Panc1 (cell line): ENCODE measurements at regions of chr19 and their contacts with region 1.

Region 1: DNA sequence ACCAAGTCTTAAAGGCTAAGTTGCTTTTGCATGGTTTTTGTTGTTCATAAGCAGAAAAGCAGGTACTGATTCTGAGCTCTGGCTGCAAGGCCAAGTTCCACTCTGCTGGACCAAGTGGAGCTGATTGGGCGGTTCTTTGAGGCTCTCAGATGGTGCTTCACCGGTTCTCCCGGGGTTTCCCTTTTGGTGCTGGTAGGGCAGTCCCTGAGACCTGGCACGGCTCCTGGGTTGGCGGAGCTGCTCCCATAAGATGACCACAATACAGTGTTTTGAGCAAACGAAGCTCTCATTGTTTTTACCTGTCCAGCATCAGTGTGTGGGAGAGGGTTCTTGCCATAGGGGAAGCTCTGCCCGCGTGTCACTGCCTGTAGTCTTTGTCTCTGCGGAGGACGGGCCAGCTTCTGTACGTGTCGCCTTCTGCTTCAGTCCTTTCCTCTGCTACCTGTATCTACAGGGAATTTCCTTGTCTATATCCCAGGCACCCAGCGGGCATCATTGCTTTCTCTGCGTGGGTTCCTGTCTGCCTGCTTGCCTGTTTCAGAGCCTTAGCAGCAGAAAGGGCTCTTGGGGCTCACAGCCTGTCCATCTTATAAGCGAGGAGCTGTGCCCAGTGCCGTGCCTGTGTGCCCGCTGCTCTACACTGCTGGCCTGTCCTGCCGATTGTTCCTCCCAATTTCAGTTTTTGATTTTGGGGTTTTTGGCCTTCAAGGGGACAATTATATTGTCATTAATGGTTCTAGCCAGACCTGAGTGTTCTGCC is 2.3 kb downstream of the U2AF2 start:
- DNase-seq: no peak
- ATAC-seq: no peak
- H3K4me3 ChIP-seq: peak overlapping the region; percentile 72 to 85
- H3K27ac ChIP-seq: peak overlapping the region; percentile 99
- H3K4me1 ChIP-seq: peaks cover 36% of the 10 kb centered on the region
- H3K27me3 ChIP-seq: no peaks in the 10 kb centered on the region
- CTCF ChIP-seq: no peak

Region 2: DNA sequence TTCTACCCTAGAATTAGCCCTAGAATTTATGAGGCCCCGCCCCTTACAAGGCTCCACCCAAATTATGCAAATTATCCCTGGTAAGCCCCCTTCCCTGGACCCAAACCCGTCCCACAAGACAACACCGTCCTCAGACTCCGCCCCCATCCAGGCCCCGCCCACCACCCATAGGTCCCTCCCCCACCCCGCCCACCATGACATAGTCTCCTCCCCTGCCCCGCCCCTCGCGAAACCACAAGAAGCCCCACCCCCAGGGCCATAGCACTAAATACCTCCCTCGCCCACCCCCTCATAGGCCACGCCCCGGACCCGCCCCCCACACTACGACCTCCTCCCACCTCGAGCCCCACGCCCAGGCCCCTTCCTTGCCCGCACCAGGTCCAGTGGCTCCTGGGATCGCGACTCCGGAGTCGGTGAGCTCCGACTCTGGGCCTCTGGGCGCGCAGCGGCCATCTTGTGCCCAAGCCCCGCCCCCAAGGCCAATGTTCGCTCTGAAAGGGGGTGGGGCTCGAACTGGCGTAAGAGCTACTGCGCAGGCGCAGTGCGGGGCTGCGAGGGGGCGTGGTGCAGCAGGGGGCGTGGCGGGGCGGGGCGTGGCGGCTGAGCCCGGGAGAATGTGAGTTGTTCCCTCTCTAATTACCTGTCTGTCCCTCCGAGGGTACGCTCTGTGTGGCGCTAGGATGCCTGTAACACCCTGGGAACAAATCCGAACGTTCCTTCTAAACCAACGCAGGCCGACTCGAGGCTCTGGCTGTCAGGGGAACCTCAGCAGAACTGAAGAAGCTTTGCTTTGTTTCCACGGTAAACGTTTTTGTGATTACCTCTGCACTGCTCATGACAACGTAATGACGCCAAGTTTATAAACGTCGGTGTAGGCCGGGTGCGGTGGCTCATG is 32.8 kb before region 1 on chr19 and contains the start of gene ZNF784:
- CTCF ChIA-PET with region 1: no interaction called
- POLR2A ChIA-PET with region 1: no interaction called
- in situ Hi-C with region 1: no loop called
- intact Hi-C with region 1: no loop called
- DNase-seq: no peak
- ATAC-seq: peak; percentile 85
- H3K4me3 ChIP-seq: peak within 1 kb of the TSS; percentile 60 to 82
- H3K27ac ChIP-seq: peak within 1 kb of the TSS; percentile 49
- H3K4me1 ChIP-seq: 0 out of 2 replicates have a peak, but pooled peaks cover 3% of the 10 kb centered on the region
- H3K27me3 ChIP-seq: no peaks in the 10 kb centered on the region
- CTCF ChIP-seq: no peak
- total RNA-seq, gene ZNF784: 8.9 TPM

Region 3: GRCh38 chr19:55668603-55669348 is 11.6 kb after region 1 on chr19:
- CTCF ChIA-PET with region 1: interaction called, 10 read pairs
- POLR2A ChIA-PET with region 1: interaction called, 5 read pairs
- in situ Hi-C with region 1: no loop called
- intact Hi-C with region 1: no loop called
- DNase-seq: no peak
- ATAC-seq: no peak
- H3K4me3 ChIP-seq: no peak overlapping the region
- H3K27ac ChIP-seq: peak overlapping the region; percentile 96
- H3K4me1 ChIP-seq: peaks cover 77% of the 10 kb centered on the region
- H3K27me3 ChIP-seq: no peaks in the 10 kb centered on the region
- CTCF ChIP-seq: no peak

Region 4: DNA sequence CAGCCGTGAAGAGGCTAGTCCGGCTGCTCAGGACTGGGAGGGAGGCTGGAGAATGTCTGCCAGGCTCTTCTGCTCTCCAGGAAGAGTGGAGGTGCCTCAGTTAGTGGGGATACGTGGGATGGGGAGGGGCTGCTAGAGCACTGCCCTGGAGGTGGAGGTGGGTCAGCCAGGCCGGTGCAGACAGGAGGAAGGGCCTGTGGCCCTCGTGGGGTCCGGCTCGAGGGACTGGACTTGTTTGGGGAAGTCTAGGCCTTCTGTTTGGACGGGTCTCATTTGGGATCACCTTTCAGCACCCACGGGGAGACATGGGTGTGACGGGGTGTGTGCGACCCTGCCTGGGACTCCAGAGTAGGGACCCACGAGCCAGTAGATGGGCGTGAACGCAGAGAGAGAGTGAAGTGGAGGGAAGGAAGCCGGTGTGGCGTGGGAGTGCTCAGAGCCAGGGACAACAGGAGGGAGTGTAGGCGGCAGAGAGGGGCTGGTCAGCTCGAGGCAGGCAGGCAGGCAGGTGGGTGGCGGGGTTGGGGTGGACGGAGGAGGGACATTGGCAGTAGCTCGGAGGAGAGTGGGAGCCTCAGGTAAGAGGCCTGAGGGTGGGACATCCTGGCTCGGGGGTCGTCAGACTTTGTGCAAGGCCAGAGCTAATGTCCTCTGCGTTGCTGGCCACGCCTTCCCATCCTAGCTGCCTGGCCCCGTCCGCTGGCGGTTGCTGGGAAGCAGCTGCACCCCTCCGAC is 29.3 kb after region 1 on chr19:
- CTCF ChIA-PET with region 1: interaction called, 10 read pairs
- POLR2A ChIA-PET with region 1: no interaction called
- in situ Hi-C with region 1: no loop called
- intact Hi-C with region 1: no loop called
- DNase-seq: no peak
- ATAC-seq: no peak
- H3K4me3 ChIP-seq: no peak overlapping the region
- H3K27ac ChIP-seq: no peak overlapping the region
- H3K4me1 ChIP-seq: peaks cover 7% of the 10 kb centered on the region; the same call in 1 of the 2 replicates
- H3K27me3 ChIP-seq: no peaks in the 10 kb centered on the region
- CTCF ChIP-seq: no peak

Region 5: GRCh38 chr19:56026769-56027168 is 369.6 kb after region 1 on chr19:
- CTCF ChIA-PET with region 1: no interaction called
- POLR2A ChIA-PET with region 1: no interaction called
- in situ Hi-C with region 1: no loop called
- intact Hi-C with region 1: no loop called
- DNase-seq: no peak
- ATAC-seq: no peak
- H3K4me3 ChIP-seq: no peak overlapping the region
- H3K27ac ChIP-seq: no peak overlapping the region
- H3K4me1 ChIP-seq: no peaks in the 10 kb centered on the region
- H3K27me3 ChIP-seq: peaks cover 14% of the 10 kb centered on the region
- CTCF ChIP-seq: no peak